ENCODE measurements at regions of chr1 and their contacts with region 1.

Region 1: GRCh38 chr1:28248283-28249012 is 10.9 kb upstream of the SESN2 start:
- DNase-seq: peak; percentile 81 to 88 (median 86)
- ATAC-seq: peak; percentile 39
- H3K4me3 ChIP-seq: no peak overlapping the region
- H3K27ac ChIP-seq: peak overlapping the region; percentile 73 to 90 (median 85)
- H3K4me1 ChIP-seq: peaks cover 60% of the 10 kb centered on the region
- H3K27me3 ChIP-seq: no peaks in the 10 kb centered on the region
- CTCF ChIP-seq: peak; percentile 75 to 93 (median 88)
- POLR2A ChIP-seq: no peak

Region 2: DNA sequence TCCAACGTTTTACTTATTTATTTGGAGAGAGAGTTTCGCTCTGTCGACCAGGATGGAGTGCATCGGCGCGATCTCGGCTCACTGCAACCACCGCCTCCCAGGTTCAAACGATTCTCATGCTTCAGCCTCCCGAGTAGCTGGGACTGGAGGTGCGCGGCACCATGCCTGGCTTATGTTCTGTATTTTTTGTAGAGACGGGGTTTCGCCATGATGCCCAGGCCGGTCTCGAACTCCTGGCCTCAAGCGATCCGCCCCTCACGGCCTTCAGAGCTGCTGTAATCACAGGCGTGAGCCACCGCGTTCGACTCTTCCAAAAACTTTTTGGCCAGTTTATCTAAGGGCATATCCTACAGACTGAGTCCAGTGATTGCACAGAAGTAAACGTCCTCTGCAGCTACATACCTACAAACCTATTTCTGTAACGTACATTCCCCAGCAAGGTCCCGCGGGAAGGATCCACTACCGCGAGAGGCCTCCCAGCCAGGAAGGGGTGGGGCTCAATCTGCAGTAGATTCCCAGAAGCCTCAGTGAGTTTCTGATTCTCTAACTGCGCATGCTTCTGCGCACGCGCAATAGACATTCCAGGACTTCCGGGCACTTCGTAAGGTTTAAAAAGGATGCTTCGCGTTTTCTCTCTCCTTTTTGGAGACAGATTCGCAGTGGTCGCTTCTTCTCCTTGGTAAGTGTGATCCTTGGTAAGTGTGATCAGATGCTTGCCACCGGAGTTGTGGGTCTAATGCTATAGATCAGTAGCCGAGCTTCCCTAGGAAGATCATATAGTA is 257.1 kb after region 1 on chr1 and contains the start of gene RCC1:
- intact Hi-C with region 1: loop called (anchors 10 kb)
- DNase-seq: peak; percentile 97 to 99 (median 98)
- ATAC-seq: peak; percentile 96
- H3K4me3 ChIP-seq: peak within 1 kb of the TSS; percentile 84 to 86
- H3K27ac ChIP-seq: peak within 1 kb of the TSS; percentile 79 to 87 (median 84)
- H3K4me1 ChIP-seq: peaks cover 46% of the 10 kb centered on the region
- H3K27me3 ChIP-seq: no peaks in the 10 kb centered on the region
- CTCF ChIP-seq: no peak
- POLR2A ChIP-seq: peak; percentile 70 to 98 (median 97)
- total RNA-seq, gene RCC1: 10.1 to 23.4 TPM

Measured in body of pancreas (tissue), 4 donors.